Right ventricle myocardium inferior (tissue), 1 donor: ENCODE measurements at regions of chr9 and their contacts with region 1.

Region 1: GRCh38 chr9:108142504-108143201 is 653.1 kb upstream of the KLF4 start:
- DNase-seq: peak; percentile 89
- ATAC-seq: peak; percentile 99

Region 2: GRCh38 chr9:107749787-107750444 is 392.7 kb before region 1 on chr9:
- intact Hi-C with region 1: no loop called
- DNase-seq: peak; percentile 92
- ATAC-seq: peak; percentile 94

Region 3: DNA sequence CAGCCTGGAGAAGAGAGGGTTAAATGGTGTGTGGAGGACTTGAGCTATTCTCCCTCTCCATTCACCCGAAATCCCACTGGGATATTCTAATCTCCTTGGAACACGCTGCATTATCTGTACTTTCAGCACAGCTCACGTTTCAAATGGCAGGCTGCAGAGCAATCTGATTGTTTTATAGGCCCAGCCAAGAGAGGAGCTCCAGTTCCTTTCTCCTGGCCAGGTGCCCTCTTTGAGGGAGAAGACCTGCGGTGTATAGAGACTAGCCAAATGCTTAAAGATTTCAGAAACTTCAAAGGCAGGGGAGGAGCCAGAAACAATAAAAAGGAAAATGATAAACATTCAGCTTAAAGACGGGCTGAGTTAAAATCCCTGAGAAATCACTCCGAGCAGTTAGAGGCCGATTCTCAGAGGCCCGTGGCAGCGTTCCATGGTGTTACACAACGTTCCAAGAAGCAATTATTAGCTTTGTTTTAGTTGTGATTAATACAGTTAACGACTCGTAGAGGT is 89.0 kb before region 1 on chr9:
- intact Hi-C with region 1: loop called (anchors 5 kb)
- DNase-seq: peak; percentile 79
- ATAC-seq: peak; percentile 81

Region 4: DNA sequence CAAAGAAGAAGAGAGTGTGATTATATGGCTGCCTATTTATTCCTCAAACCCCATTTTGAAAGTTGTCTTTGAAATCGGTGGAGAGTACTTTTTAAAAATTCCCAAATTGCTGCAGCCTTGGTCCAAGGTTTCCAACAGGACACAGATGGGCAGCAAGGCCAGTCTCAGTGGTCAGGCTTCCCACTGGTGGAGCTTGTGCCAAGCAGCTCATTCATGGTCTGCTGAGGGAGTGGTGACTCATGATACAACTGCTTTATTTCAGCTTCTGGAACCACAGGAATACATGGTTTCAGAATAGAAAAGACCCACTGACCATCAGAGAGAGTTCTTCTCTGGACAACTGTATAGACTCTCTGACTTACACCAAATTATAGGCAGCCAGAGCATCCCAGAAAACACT is 20.0 kb after region 1 on chr9:
- intact Hi-C with region 1: no loop called
- DNase-seq: no peak
- ATAC-seq: no peak